Activated B cell treated with CpG ODN at 0.5 μM for 24 hours (primary cell): ENCODE measurements at regions of chr12 and their contacts with region 1.

Region 1: DNA sequence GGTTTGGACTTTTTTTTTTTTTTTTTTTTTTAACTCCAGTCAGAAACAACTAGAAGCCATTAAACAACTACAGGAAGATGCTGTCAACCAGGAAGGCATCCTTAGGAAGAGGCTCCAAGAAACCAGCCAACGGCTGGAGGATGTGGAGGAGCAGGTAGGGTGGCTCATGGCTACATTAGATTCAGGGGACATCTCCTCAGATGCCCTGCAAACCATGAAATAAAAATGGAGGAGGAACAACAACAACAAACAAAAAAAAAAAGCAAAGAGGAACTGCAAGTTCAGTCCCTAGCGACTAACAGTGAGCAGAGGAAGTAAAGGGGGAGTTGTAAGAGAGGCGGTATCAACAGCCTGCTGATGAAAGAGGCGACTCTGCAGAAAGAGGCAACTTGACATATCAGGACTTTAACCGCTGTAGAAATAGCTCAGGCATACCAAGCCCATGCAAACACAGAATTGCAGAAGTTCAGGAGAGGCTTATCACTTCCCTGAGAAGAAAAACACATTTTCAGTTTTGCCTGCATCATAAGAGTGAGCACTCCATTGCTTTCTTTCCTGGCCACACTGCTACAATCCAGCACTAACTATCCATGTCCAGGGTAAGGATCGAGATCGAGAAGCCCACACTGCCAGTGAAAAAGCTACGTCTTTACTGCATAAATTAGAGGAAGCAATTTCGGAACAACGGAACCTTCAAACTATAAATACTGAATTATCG is 103.5 kb upstream of the BCAT1 start:
- DNase-seq: peak; percentile 68
- ATAC-seq: peak; percentile 87
- H3K4me3 Mint-ChIP-seq: peak overlapping the region; percentile 95
- H3K27ac Mint-ChIP-seq: peak overlapping the region; percentile 96
- H3K4me1 Mint-ChIP-seq: peaks cover 48% of the 10 kb centered on the region
- H3K27me3 Mint-ChIP-seq: no peaks in the 10 kb centered on the region
- CTCF ChIP-seq: no peak

Region 2: GRCh38 chr12:24838531-24838950 is 213.8 kb before region 1 on chr12:
- CTCF ChIA-PET with region 1: no interaction called
- POLR2A ChIA-PET with region 1: interaction called, 3 read pairs
- intact Hi-C with region 1: loop called (anchors 2 kb)
- DNase-seq: no peak
- ATAC-seq: no peak
- H3K4me3 Mint-ChIP-seq: no peak overlapping the region
- H3K27ac Mint-ChIP-seq: peak overlapping the region; percentile 24
- H3K4me1 Mint-ChIP-seq: peaks cover 23% of the 10 kb centered on the region
- H3K27me3 Mint-ChIP-seq: no peaks in the 10 kb centered on the region
- CTCF ChIP-seq: no peak

Region 3: GRCh38 chr12:24997970-24998582 is 54.3 kb before region 1 on chr12:
- CTCF ChIA-PET with region 1: interaction called, 20 read pairs
- POLR2A ChIA-PET with region 1: interaction called, 486 read pairs
- intact Hi-C with region 1: loop called (anchors 1 kb)
- DNase-seq: no peak
- ATAC-seq: peak; percentile 74
- H3K4me3 Mint-ChIP-seq: peak overlapping the region; percentile 69
- H3K27ac Mint-ChIP-seq: peak overlapping the region; percentile 97
- H3K4me1 Mint-ChIP-seq: peaks cover 90% of the 10 kb centered on the region
- H3K27me3 Mint-ChIP-seq: no peaks in the 10 kb centered on the region
- CTCF ChIP-seq: no peak

Region 4: DNA sequence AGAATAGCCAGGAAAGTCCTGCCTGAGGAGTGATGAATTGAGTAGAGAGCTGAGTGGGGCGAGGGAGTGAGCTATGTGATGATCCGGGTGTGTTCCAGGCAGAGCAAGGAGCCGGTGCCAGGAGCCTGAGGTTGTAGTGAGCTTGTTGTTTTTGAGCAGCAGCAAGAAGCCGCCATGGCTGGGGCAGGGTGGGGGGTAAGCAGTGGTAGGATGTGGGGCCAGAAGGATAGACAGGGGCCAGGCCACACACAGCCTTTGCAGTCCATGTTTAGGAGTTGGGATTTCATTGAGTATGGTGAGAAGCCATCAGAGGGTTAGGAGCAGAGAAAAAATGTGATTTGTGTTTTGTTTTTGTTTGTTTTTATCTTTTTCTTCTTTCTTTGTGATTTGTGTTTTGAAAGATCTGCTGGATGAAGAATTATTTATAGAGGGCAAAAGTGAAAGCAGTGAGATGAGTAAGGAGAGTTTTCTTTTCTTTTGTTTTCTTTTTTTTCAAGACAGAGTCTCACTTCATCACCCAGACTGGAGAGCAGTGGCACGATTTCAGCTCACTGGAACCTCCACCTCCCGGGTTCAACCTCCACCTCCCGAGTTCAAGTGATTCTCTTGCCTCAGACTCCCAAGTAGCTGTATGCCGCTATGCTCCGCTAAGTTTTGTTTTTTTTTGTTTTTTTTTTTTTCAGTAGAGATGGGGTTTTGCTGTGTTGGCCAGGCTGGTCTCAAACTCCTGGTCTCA is 11.2 kb before region 1 on chr12:
- CTCF ChIA-PET with region 1: no interaction called
- POLR2A ChIA-PET with region 1: interaction called, 52 read pairs
- intact Hi-C with region 1: loop called (anchors 1 kb)
- DNase-seq: no peak
- ATAC-seq: peak; percentile 54
- H3K4me3 Mint-ChIP-seq: peak overlapping the region; percentile 17
- H3K27ac Mint-ChIP-seq: peak overlapping the region; percentile 51
- H3K4me1 Mint-ChIP-seq: peaks cover 36% of the 10 kb centered on the region
- H3K27me3 Mint-ChIP-seq: no peaks in the 10 kb centered on the region
- CTCF ChIP-seq: no peak

Region 5: GRCh38 chr12:25089738-25090137 is 37.4 kb after region 1 on chr12:
- CTCF ChIA-PET with region 1: no interaction called
- POLR2A ChIA-PET with region 1: interaction called, 3 read pairs
- intact Hi-C with region 1: loop called (anchors 5 kb)
- DNase-seq: no peak
- ATAC-seq: peak; percentile 45
- H3K4me3 Mint-ChIP-seq: no peak overlapping the region
- H3K27ac Mint-ChIP-seq: peak overlapping the region; percentile 76
- H3K4me1 Mint-ChIP-seq: peaks cover 51% of the 10 kb centered on the region
- H3K27me3 Mint-ChIP-seq: no peaks in the 10 kb centered on the region
- CTCF ChIP-seq: no peak

Region 6: GRCh38 chr12:25151476-25151875 is 99.1 kb after region 1 on chr12:
- CTCF ChIA-PET with region 1: interaction called, 3 read pairs
- POLR2A ChIA-PET with region 1: no interaction called
- intact Hi-C with region 1: loop called (anchors 1 kb)
- DNase-seq: no peak
- ATAC-seq: no peak
- H3K4me3 Mint-ChIP-seq: no peak overlapping the region
- H3K27ac Mint-ChIP-seq: no peak overlapping the region
- H3K4me1 Mint-ChIP-seq: peaks cover 22% of the 10 kb centered on the region
- H3K27me3 Mint-ChIP-seq: no peaks in the 10 kb centered on the region
- CTCF ChIP-seq: no peak

Region 7: GRCh38 chr12:25186788-25187397 is 134.5 kb after region 1 on chr12:
- CTCF ChIA-PET with region 1: no interaction called
- POLR2A ChIA-PET with region 1: no interaction called
- intact Hi-C with region 1: no loop called
- DNase-seq: no peak
- ATAC-seq: peak; percentile 69
- H3K4me3 Mint-ChIP-seq: peak overlapping the region; percentile 78
- H3K27ac Mint-ChIP-seq: peak overlapping the region; percentile 26
- H3K4me1 Mint-ChIP-seq: peaks cover 10% of the 10 kb centered on the region
- H3K27me3 Mint-ChIP-seq: no peaks in the 10 kb centered on the region
- CTCF ChIP-seq: no peak

Region 8: DNA sequence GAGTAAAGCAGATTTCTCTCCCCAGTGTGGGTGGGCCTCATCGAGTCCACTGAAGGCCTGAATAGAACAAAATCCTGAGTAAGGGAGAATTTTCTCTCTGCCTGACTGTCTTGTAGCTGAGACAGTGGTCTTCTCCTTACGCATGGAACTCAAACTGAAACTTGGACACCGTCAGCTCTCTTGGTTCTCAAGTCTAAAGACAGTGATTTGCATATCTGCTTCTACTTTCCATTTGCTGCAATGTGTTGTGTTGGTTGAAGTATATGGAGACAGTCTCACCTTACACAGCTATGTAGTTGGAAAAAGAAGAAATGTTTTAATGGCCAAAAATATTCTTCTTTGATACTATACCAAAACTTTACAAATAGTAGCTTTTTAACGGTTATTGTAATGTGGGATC is 660.9 kb after region 1 on chr12:
- CTCF ChIA-PET with region 1: no interaction called
- POLR2A ChIA-PET with region 1: no interaction called
- intact Hi-C with region 1: no loop called
- DNase-seq: no peak
- ATAC-seq: peak; percentile 50
- H3K4me3 Mint-ChIP-seq: peak overlapping the region; percentile 6
- H3K27ac Mint-ChIP-seq: no peak overlapping the region
- H3K4me1 Mint-ChIP-seq: peaks cover 12% of the 10 kb centered on the region
- H3K27me3 Mint-ChIP-seq: no peaks in the 10 kb centered on the region
- CTCF ChIP-seq: no peak

Region 9: GRCh38 chr12:26113853-26114719 is 1061.7 kb after region 1 on chr12:
- CTCF ChIA-PET with region 1: no interaction called
- POLR2A ChIA-PET with region 1: interaction called, 3 read pairs
- intact Hi-C with region 1: loop called (anchors 5 kb)
- DNase-seq: peak; percentile 77
- ATAC-seq: peak; percentile 80
- H3K4me3 Mint-ChIP-seq: peak overlapping the region; percentile 85
- H3K27ac Mint-ChIP-seq: peak overlapping the region; percentile 92
- H3K4me1 Mint-ChIP-seq: peaks cover 58% of the 10 kb centered on the region
- H3K27me3 Mint-ChIP-seq: no peaks in the 10 kb centered on the region
- CTCF ChIP-seq: no peak